ENCODE measurements at regions of chr6 and their contacts with region 1.

Region 1: DNA sequence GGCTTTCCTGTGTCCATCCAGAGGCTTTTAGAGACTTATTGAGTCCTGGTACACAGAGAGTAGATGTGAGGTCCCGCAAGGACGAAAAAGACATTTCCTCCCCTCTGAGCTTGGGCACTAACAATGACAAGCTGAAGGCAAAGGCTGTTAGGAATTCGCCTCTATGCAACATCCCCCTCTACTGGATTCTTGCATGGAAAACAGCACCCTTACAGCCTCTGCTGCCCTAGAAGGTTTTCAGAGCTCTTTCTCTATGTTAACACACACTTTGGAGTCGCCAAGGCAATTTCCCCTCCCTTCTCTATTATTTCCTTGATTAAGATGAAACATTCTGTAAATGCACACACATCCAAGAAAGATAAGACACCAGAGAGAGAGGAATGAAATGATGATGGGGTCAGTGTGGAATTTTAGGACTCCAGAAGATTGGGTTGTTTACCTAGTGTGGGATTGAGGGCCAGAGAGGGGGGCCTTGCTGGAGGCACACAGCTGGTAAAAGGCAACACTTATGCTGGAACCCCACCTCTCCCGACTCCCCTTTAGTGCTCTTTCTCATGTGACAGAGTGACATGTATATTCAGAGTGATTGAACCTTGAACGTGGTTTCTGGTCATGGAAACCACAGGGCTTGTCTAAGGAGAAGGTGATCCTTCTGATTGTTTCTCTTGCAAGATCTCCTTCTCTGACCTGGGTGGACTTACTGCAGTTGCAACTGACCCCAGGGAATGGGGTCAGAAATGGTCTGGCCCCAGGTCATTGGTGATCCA is 300.7 kb downstream of the CLIC5 start:
- DNase-seq: peak; percentile 73
- H3K4me3 Mint-ChIP-seq: no peak overlapping the region
- H3K27ac Mint-ChIP-seq: no peak overlapping the region
- H3K4me1 Mint-ChIP-seq: peaks cover 35% of the 10 kb centered on the region
- H3K27me3 Mint-ChIP-seq: no peaks in the 10 kb centered on the region

Region 2: GRCh38 chr6:44655412-44656342 is 1059.2 kb before region 1 on chr6:
- CTCF ChIA-PET with region 1: interaction called, 16 read pairs
- intact Hi-C with region 1: loop called (anchors 1 kb)
- DNase-seq: peak; percentile 81
- H3K4me3 Mint-ChIP-seq: peak overlapping the region; percentile 38
- H3K27ac Mint-ChIP-seq: peak overlapping the region; percentile 62
- H3K4me1 Mint-ChIP-seq: peaks cover 10% of the 10 kb centered on the region
- H3K27me3 Mint-ChIP-seq: no peaks in the 10 kb centered on the region

Region 3: DNA sequence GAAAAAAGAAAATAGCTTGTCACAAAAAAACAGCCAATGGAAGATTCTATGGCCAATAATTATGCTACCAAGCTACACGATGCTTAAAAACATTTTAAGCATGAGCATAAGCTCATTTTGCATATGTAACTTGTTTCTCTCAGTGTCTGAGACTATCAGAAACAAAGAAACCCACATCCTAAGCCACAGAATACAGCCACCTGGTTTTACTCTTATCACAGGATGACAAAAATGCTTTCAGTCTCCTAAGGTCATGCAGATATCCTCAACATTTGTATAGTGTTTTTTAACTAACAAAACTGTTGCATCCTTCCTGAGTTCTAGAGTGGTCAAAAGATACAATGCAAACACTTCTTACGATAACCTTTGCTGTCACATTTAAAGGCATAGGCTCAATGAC is 558.8 kb before region 1 on chr6:
- CTCF ChIA-PET with region 1: no interaction called
- intact Hi-C with region 1: loop called (anchors 2 kb)
- DNase-seq: peak; percentile 54
- H3K4me3 Mint-ChIP-seq: no peak overlapping the region
- H3K27ac Mint-ChIP-seq: peak overlapping the region; percentile 59
- H3K4me1 Mint-ChIP-seq: peaks cover 28% of the 10 kb centered on the region
- H3K27me3 Mint-ChIP-seq: no peaks in the 10 kb centered on the region

Region 4: DNA sequence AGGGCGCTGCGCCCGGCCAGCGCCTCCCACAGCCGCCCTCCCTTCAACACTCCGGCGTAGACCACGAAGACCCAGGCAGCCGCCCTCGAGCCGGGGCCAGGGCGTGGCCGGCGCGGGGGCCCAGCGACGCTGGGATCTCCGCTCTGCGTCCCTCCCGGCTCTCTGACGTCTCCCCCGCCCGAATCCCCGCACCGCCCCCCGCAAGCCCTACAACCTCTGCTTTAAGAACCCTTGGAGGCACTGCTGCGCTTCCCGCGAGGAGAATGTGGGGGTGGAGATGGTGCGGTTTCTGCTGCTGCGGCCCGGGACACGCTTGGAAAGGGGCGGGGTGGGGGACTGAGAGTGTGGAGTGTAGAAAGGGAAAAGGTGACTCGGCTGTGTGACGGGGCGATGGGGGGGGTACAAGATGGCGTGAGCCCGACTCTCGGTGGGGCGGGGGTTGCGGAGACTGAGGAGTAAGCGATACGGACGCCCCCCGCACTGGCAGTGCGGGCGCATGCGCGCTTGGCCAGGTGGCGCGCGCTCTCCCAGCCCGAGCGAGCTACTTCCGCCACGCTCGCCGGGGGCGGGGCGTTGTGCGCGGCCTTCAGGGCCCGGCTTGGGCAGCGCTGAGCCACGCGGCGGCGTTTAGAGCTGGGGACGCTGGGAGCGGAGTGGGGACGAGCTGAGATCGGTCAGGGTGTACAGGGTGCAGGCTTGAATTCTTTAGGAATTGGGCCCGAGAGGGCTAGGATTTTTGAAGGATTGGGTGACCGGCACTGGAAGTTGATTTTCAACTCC is 337.2 kb before region 1 on chr6 and contains the start of gene SUPT3H:
- CTCF ChIA-PET with region 1: interaction called, 5 read pairs
- intact Hi-C with region 1: loop called (anchors 1 kb)
- DNase-seq: peak; percentile 91
- H3K4me3 Mint-ChIP-seq: peak within 1 kb of the TSS; percentile 92
- H3K27ac Mint-ChIP-seq: peak within 1 kb of the TSS; percentile 99
- H3K4me1 Mint-ChIP-seq: peaks cover 16% of the 10 kb centered on the region
- H3K27me3 Mint-ChIP-seq: no peaks in the 10 kb centered on the region
- total RNA-seq, gene SUPT3H: 15.7 to 17.9 TPM

Region 5: GRCh38 chr6:45558858-45559257 is 156.1 kb before region 1 on chr6:
- CTCF ChIA-PET with region 1: no interaction called
- intact Hi-C with region 1: loop called (anchors 1 kb)
- DNase-seq: no peak
- H3K4me3 Mint-ChIP-seq: no peak overlapping the region
- H3K27ac Mint-ChIP-seq: no peak overlapping the region
- H3K4me1 Mint-ChIP-seq: peaks cover 22% of the 10 kb centered on the region
- H3K27me3 Mint-ChIP-seq: no peaks in the 10 kb centered on the region

Region 6: DNA sequence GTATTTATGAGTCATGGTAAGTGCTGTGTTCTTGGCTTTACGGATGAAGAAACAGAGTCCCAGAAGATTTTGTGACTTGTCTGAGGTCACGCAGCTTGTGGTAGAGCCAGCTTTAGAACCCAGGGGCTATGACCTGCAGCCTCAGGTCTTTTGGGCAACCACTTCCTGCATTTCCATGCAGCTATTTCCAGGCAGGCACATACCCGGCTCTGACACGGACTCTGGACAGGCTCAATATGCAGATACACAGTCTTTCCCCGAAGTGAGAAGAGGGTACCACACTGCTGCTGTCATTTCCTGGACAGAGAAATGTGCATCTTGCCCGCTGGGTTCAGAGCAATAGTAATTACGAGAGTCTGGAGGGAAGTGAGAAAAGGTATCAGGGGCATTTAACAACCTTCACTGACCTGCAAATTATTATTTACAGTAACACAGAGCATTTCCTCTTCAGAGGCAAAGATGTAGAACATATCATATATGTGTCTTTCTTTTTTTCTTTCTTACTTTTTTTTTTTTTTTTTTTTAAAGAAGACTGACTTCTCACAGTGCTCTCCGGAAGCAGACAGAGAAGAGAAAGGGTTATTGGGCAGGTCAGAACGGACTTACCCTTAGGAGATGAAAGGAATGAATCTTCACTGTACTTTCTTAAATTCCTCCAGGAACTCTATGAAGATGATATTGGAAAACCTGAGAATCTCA is 115.7 kb after region 1 on chr6:
- CTCF ChIA-PET with region 1: no interaction called
- intact Hi-C with region 1: loop called (anchors 1 kb)
- DNase-seq: peak; percentile 76
- H3K4me3 Mint-ChIP-seq: peak overlapping the region; percentile 25
- H3K27ac Mint-ChIP-seq: peak overlapping the region; percentile 75
- H3K4me1 Mint-ChIP-seq: peaks cover 24% of the 10 kb centered on the region
- H3K27me3 Mint-ChIP-seq: peaks cover 6% of the 10 kb centered on the region

Measured in activated naive CD4-positive, alpha-beta T cell treated with anti-CD3 and anti-CD28 coated beads for 36 hours (primary cell).